ENCODE measurements at regions of chr2 and their contacts with region 1.

Region 1: DNA sequence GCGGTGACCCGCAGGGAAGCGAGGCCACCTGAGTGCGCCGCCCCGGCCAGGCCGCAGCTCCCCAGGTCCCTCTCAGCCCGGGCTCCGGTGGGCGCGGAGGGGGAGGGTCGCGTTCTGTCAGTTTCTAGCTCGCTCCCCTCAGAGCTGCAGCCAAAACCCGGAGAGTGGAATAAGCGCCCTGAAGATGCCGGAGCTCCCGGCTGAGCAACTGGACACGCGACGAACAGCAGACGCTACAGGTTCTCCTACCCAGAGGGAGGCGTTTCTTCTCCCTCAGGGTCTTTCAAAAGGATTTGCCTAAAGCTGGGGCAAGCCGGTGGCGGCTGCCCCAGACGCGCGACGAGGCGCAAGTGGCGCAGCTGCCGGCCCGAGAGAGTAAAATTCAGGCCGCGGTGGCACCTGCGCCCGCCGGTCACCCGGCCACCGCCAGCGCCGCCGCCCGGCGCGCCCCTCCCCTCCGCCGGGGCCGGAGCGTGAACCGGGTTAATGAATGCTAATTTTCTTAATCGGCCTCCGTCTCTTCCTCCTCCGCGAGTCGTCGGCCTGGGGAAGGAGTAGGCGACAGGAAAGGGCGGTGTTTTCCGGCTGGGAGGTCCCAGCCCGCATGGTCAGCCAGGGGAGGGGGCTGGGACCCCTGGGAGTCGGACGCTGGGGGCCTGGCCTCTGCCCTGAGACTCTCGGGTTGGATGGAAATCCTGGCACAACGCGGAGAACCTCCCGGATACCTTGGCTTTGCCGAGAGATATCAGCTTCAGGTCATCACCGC is 845 bp upstream of the CDC42EP3 start:
- DNase-seq: peak; percentile 67 to 76 (median 74)
- H3K4me3 ChIP-seq: peak overlapping the region; percentile 95 to 98 (median 97)
- H3K4me3 Mint-ChIP-seq: peak overlapping the region; percentile 82 to 86
- H3K27ac ChIP-seq: peak overlapping the region; percentile 95 to 97
- H3K27ac Mint-ChIP-seq: peak overlapping the region; percentile 91 to 98 (median 95)
- H3K4me1 ChIP-seq: peaks cover 49 to 59% of the 10 kb centered on the region in 2 donors
- H3K4me1 Mint-ChIP-seq: peaks cover 57% of the 10 kb centered on the region
- H3K27me3 ChIP-seq: no peaks in the 10 kb centered on the region
- H3K27me3 Mint-ChIP-seq: peaks cover 0 to 2% (median 0%) of the 10 kb centered on the region in 3 donors
- CTCF ChIP-seq: no peak

Region 2: GRCh38 chr2:37537316-37537715 is 135.0 kb before region 1 on chr2:
- intact Hi-C with region 1: loop called in 1 of 2 experiments (anchors 5 kb)
- DNase-seq: no peak
- H3K4me3 ChIP-seq: no peak overlapping the region
- H3K4me3 Mint-ChIP-seq: no peak overlapping the region
- H3K27ac ChIP-seq: no peak overlapping the region
- H3K27ac Mint-ChIP-seq: peak overlapping the region in 1 of 7 donors; percentile 50
- H3K4me1 ChIP-seq: peaks cover 3 to 8% of the 10 kb centered on the region in 2 donors
- H3K4me1 Mint-ChIP-seq: peaks cover 11% of the 10 kb centered on the region
- H3K27me3 ChIP-seq: no peaks in the 10 kb centered on the region
- H3K27me3 Mint-ChIP-seq: peaks cover 0 to 6% (median 2%) of the 10 kb centered on the region in 3 donors
- CTCF ChIP-seq: no peak

Region 3: DNA sequence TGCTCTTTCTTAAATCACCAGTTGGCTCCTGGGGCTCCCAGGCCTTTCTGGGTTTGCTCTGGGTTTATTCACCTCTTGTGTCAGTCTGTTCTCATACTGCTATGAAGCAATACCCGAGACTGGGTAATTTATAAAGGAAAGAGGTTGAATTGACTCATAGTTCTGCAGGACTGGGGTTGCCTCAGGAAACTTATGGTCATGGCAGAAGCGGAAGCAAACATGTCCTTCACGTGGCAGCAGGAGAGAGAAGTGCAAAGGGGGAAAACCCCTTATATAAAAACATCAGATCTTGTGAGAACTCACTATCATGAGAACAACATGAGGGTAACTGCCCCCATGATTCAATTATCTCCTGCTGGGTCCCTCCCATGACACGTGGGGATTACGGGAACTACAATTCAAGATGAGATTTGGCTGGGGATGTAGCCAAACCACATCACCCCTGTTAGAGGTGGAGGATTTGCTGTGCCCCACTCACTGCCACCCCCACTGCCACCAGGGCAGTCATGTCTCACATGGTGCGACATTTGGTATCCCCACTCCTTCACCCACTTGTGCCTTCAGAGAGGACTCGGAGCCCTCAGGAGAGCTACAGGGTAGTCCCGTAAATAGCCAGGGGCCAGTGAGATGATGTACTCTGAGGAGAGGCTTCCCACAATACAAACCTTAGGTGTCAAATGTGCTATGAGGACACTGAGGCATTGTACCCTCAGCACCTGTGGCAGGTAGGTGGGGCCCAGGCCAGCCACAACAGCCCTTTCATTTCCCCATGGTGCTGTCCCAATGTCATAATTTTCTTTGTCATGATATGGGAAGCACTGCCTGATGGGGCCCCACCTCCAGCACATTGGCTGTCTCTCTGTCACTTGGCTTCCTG is 36.5 kb before region 1 on chr2:
- intact Hi-C with region 1: loop called in 1 of 2 experiments (anchors 5 kb)
- DNase-seq: peak; percentile 97 to 100 (median 99)
- H3K4me3 ChIP-seq: peak overlapping the region in 1 of 3 experiments; percentile 26
- H3K4me3 Mint-ChIP-seq: peak overlapping the region; percentile 34 to 48
- H3K27ac ChIP-seq: peak overlapping the region; percentile 98 to 99
- H3K27ac Mint-ChIP-seq: peak overlapping the region; percentile 99 to 100 (median 99)
- H3K4me1 ChIP-seq: peaks cover 50 to 60% of the 10 kb centered on the region in 2 donors
- H3K4me1 Mint-ChIP-seq: peaks cover 59% of the 10 kb centered on the region
- H3K27me3 ChIP-seq: no peaks in the 10 kb centered on the region
- H3K27me3 Mint-ChIP-seq: peaks cover 0 to 4% (median 2%) of the 10 kb centered on the region in 3 donors
- CTCF ChIP-seq: no peak

Region 4: DNA sequence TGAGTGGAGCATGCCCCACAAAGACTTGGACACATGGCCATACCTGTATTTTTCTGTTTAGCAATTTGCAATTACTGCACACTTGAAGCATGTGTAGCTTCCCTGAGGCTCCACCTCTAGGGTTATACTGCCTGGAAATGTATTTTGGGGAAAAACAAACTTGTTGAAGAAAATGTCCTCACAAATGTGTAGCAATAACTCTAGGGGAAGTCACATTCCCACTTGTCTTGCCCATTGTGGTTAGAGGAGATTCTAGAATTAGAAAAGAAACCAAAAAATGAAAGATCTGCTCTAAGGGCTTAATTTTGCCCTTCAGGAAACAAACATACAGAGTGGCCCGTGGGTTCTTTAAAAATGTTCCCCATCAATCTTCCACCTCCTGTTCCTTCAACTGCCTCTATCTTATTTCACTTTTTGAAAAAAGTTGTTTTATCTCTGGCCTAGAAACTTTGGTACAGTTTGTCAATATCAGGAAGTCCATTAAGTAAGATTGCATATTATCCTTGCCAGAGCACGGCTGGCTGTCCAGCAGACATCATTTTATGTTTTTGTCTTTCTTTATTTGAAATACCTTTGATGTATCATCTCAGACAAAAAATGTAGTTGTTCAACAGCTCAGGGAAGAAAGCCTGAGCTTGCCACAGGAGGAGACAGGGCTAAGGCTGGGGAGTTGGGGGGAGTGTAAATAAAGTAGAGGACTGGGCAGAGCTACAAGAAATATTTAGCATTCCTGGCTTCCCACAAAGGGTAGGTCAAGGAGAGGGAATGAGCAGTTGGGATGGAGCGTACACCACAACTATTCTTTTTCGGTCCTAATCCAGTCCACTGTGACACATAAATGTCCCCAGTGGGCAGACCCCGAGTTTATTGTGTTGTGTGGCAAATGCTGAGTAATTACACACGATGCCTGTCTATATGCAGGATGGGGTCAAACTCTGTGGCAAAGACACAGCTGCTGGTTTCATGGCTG is 96.0 kb after region 1 on chr2:
- intact Hi-C with region 1: loop called in 1 of 2 experiments (anchors 10 kb)
- DNase-seq: peak; percentile 25 to 56 (median 53)
- H3K4me3 ChIP-seq: peak overlapping the region in 1 of 3 experiments; percentile 56
- H3K4me3 Mint-ChIP-seq: peak overlapping the region; percentile 27 to 85
- H3K27ac ChIP-seq: peak overlapping the region; percentile 84 to 89
- H3K27ac Mint-ChIP-seq: peak overlapping the region; percentile 92 to 99 (median 95)
- H3K4me1 ChIP-seq: peaks cover 73 to 83% of the 10 kb centered on the region in 2 donors
- H3K4me1 Mint-ChIP-seq: peaks cover 83% of the 10 kb centered on the region
- H3K27me3 ChIP-seq: no peaks in the 10 kb centered on the region
- H3K27me3 Mint-ChIP-seq: peaks cover 0 to 5% (median 0%) of the 10 kb centered on the region in 3 donors
- CTCF ChIP-seq: no peak

Measured in CD14-positive monocyte (primary cell).